PC-9 (cell line): ENCODE measurements at regions of chr21 and their contacts with region 1.

Region 1: GRCh38 chr21:31218830-31219608 is 125.0 kb downstream of the TIAM1 start:
- DNase-seq: peak; percentile 69 to 89
- H3K4me3 ChIP-seq: peak overlapping the region; percentile 6; the same call in 1 of the 2 replicates
- H3K27ac ChIP-seq: peak overlapping the region; percentile 82
- H3K4me1 ChIP-seq: peaks cover 24% of the 10 kb centered on the region
- H3K27me3 ChIP-seq: no peaks in the 10 kb centered on the region
- CTCF ChIP-seq: no peak

Region 2: GRCh38 chr21:30718239-30718909 is 500.6 kb before region 1 on chr21 and contains the start of gene KRTAP21-3:
- CTCF ChIA-PET with region 1: no interaction called
- POLR2A ChIA-PET with region 1: no interaction called
- intact Hi-C with region 1: no loop called
- DNase-seq: no peak
- H3K4me3 ChIP-seq: no peak within 1 kb of the TSS
- H3K27ac ChIP-seq: no peak within 1 kb of the TSS
- H3K4me1 ChIP-seq: no peaks in the 10 kb centered on the region
- H3K27me3 ChIP-seq: no peaks in the 10 kb centered on the region
- CTCF ChIP-seq: no peak
- total RNA-seq, gene KRTAP21-3: not detected in 2 replicates

Region 3: GRCh38 chr21:31457675-31458074 is 238.7 kb after region 1 on chr21:
- CTCF ChIA-PET with region 1: interaction called, 13 read pairs
- POLR2A ChIA-PET with region 1: no interaction called
- intact Hi-C with region 1: no loop called
- DNase-seq: no peak
- H3K4me3 ChIP-seq: no peak overlapping the region
- H3K27ac ChIP-seq: no peak overlapping the region
- H3K4me1 ChIP-seq: no peaks in the 10 kb centered on the region
- H3K27me3 ChIP-seq: no peaks in the 10 kb centered on the region
- CTCF ChIP-seq: peak; percentile 14; the same call in 1 of the 2 replicates

Region 4: DNA sequence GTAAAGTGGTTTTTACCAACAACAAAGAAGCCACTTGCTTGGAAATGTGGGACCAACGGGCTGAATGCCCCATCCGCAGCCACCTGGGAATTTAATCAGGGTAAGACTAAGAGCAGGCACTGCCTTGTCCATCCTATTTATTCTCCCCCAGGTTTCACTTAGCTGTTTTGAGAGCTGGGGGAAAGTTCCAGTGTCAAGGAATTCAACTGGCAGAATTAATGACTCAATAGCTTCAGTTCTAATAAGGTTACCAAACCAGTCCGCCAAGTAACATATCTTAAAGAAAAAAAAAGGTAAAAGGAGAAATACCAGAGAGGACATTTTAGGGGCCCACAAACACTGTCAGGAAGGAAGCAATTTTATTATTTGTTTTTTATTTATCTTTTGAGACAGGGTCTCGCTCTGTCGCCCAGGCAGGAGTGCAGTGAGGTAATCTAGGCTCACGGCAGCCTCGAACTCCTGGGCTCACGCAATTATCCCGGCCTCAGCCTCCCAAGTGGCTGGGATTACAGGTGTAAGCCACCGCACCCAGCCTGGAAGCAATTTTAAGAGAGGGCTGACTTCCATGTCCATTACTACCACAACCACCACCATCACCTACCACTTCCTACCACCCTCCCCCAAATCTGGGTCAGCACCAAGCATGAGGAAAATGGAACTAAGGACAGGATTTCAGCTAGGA is 283.0 kb after region 1 on chr21:
- CTCF ChIA-PET with region 1: no interaction called
- POLR2A ChIA-PET with region 1: no interaction called
- intact Hi-C with region 1: loop called (anchors 5 kb)
- DNase-seq: peak; percentile 33 to 89
- H3K4me3 ChIP-seq: peak overlapping the region; percentile 50; the same call in 1 of the 2 replicates
- H3K27ac ChIP-seq: peak overlapping the region; percentile 100
- H3K4me1 ChIP-seq: peaks cover 31% of the 10 kb centered on the region
- H3K27me3 ChIP-seq: no peaks in the 10 kb centered on the region
- CTCF ChIP-seq: no peak

Region 5: DNA sequence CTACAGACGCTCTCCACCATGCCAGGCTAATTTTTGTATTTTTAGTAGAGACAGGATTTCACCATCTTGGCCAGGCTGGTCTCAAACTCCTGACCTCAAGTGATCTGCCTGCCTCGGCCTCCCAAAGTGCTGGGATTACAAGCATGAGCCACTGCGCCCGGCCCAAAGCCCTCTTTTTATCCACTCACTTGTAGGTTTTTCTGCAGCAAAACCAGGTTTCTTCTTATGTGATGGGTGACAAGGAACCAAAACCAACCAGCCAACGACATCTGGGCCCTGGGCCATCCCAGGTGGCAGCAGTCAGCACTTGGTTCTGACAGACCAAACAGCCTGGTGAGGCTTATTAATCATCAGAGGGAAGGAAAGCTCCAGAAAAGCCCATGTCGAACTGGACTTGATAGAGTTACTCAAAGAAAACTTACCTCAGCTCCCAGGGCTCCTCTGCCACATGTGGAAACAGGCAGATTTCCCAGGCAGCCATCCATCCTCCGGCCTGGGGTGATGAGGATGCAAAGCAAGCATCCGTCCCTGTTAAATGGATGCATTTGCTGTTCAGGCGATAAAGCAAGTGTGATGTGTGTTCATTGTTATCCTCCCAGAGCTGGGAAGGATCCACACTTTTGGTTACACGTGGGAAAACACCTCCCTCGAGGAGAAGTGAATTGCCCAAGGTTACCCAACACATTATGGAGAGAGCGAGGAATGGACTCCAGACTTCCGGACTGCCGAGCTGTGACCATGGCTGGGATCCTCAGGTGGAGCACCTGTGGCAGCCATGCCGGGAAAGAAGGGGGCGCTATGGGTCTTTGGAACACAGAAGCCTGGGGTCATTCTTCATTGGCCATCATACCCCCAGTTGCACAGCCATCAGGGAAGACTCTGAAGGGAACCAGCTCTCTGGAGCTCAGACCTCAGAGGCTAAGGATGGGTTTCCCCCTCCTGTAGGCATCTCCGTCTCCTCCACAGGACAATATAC is 772.6 kb after region 1 on chr21:
- CTCF ChIA-PET with region 1: no interaction called
- POLR2A ChIA-PET with region 1: no interaction called
- intact Hi-C with region 1: no loop called
- DNase-seq: no peak
- H3K4me3 ChIP-seq: no peak overlapping the region
- H3K27ac ChIP-seq: no peak overlapping the region
- H3K4me1 ChIP-seq: no peaks in the 10 kb centered on the region
- H3K27me3 ChIP-seq: peaks cover 50% of the 10 kb centered on the region
- CTCF ChIP-seq: no peak